ENCODE measurements at regions of chr2 and their contacts with region 1.

Region 1: GRCh38 chr2:73112913-73113633 is at the start of gene RAB11FIP5:
- DNase-seq: peak; percentile 70
- H3K4me3 ChIP-seq: peak within 1 kb of the TSS; percentile 73 to 76 (median 74)
- H3K27ac ChIP-seq: peak within 1 kb of the TSS; percentile 60
- H3K4me1 ChIP-seq: peaks cover 16% of the 10 kb centered on the region
- H3K27me3 ChIP-seq: no peaks in the 10 kb centered on the region
- CTCF ChIP-seq: no peak
- POLR2A ChIP-seq: peak; percentile 55
- total RNA-seq, gene RAB11FIP5: 47.0 and 49.4 TPM in 2 replicates

Region 2: DNA sequence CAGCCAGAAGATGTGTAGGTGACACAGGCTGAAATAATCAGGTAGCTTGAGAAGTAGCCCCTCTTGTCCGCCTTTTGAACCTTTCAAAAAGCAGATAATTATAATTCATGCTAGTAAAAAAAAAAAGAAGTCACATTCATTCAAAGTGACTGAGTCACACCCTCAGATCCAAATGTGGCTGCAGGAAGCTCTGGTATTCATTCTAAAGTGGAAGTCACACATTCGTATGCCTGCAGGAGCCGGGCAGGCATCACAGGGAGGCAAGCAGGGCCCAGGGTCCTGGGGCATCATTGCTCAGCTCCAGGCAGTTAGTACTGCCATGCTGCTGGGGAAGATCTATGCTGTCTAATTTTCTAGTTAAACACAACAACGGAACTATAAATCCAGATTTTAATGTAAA is 21.4 kb after region 1 on chr2:
- CTCF ChIA-PET with region 1: interaction called, 4 read pairs
- POLR2A ChIA-PET with region 1: interaction called, 3 read pairs
- dilution Hi-C with region 1: no loop called
- intact Hi-C with region 1: loop called (anchors 1 kb)
- DNase-seq: no peak
- H3K4me3 ChIP-seq: no peak overlapping the region
- H3K27ac ChIP-seq: peak overlapping the region; percentile 22
- H3K4me1 ChIP-seq: peaks cover 15% of the 10 kb centered on the region
- H3K27me3 ChIP-seq: peaks cover 0 to 2% of the 10 kb centered on the region in 2 experiments
- CTCF ChIP-seq: no peak
- POLR2A ChIP-seq: no peak

Region 3: GRCh38 chr2:73212448-73213176 is 99.5 kb after region 1 on chr2:
- CTCF ChIA-PET with region 1: no interaction called
- POLR2A ChIA-PET with region 1: no interaction called
- dilution Hi-C with region 1: no loop called
- intact Hi-C with region 1: no loop called
- DNase-seq: peak; percentile 77
- H3K4me3 ChIP-seq: no peak overlapping the region
- H3K27ac ChIP-seq: no peak overlapping the region
- H3K4me1 ChIP-seq: peaks cover 9% of the 10 kb centered on the region
- H3K27me3 ChIP-seq: peaks cover 0 to 5% of the 10 kb centered on the region in 2 experiments
- CTCF ChIP-seq: peak; percentile 96 to 99
- POLR2A ChIP-seq: no peak

Measured in endothelial cell of umbilical vein (primary cell).